GM12878 (cell line): ENCODE measurements at regions of chr3 and their contacts with region 1.

Region 1: GRCh38 chr3:191253089-191253799 is 54.2 kb downstream of the OSTN start:
- DNase-seq: peak; percentile 35
- ATAC-seq: peak; percentile 70
- H3K4me3 ChIP-seq: peak overlapping the region; percentile 28; the same call in 1 of the 2 replicates
- H3K27ac ChIP-seq: peak overlapping the region; percentile 42; the same call in 1 of the 2 replicates
- H3K4me1 ChIP-seq: peaks cover 25% of the 10 kb centered on the region
- H3K27me3 ChIP-seq: no peaks in the 10 kb centered on the region
- CTCF ChIP-seq: no peak
- EP300 ChIP-seq: no peak
- POLR2A ChIP-seq: no peak
- RAD21 ChIP-seq: no peak

Region 2: DNA sequence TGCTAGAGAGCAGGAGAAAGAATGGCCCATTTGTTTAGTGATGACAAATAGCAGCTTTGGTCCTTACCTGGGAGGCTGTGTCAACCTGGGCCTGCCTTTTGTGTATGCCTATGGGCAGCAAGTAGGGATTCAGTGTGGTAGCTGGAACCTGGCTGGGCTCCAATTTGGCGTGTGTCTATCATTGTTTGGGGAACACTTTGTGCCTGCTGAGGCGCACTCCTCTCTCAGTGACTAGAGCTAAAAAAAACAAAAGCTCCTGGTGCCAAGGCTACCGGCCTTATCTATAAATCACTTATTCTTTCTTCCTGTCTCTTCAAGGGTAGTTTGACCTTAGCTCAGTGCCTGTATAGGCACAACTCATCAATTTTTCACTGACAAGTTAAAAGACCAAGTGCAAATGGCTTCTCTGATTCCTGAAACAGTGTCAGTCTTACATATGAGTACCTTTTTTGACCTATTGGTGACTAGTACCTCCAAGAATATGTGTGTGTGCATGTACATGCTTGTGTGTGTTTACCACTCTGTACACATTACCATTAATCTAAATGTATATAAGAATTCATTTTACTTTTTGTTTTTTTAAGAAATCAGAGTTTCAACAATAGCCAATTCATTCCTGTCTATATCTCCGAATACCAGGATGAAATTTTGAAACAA is 445.4 kb before region 1 on chr3:
- CTCF ChIA-PET with region 1: no interaction called
- POLR2A ChIA-PET with region 1: no interaction called
- RAD21 ChIA-PET with region 1: no interaction called
- SMC1A ChIA-PET with region 1: no interaction called
- in situ Hi-C with region 1: no loop called
- intact Hi-C with region 1: no loop called
- DNase-seq: no peak
- ATAC-seq: no peak
- H3K4me3 ChIP-seq: no peak overlapping the region
- H3K27ac ChIP-seq: no peak overlapping the region
- H3K4me1 ChIP-seq: no peaks in the 10 kb centered on the region
- H3K27me3 ChIP-seq: no peaks in the 10 kb centered on the region
- CTCF ChIP-seq: no peak
- EP300 ChIP-seq: no peak
- POLR2A ChIP-seq: no peak
- RAD21 ChIP-seq: no peak

Region 3: DNA sequence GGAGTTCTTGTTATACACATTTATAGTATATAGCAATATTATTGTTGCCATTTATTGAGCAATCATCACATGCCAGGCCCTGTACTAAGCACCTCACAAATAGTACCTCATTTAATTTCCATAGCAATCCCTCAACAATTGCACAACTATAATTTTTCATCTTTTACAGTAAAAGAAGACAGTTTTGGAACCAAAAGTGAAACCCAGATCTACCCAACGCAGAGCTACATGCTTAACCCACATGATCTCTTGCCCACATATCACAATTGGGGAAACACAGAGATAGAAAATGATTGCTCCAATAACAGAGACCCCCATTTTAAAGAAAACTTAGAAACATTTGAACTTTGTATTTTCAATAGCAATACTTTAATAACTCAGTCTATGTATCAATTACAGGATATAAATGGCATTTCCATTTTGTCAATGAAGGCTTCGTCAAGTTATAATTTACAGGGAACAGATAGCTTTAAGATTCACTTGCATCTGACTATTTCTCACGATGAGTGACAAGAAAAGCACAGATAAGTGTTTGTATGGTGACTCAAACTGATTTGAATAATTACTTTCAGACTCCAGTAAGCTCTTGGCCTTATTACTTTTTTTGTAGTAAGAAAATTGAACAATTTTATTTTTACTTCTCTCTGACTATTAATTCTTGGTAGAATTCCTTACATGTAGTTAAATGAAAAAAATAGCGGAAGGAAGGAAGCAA is 37.2 kb after region 1 on chr3:
- CTCF ChIA-PET with region 1: interaction called, 4 read pairs
- POLR2A ChIA-PET with region 1: interaction called, 6 read pairs
- RAD21 ChIA-PET with region 1: interaction called, 10 read pairs
- SMC1A ChIA-PET with region 1: interaction called, 12 read pairs
- in situ Hi-C with region 1: no loop called
- intact Hi-C with region 1: no loop called
- DNase-seq: no peak
- ATAC-seq: peak; percentile 93
- H3K4me3 ChIP-seq: no peak overlapping the region
- H3K27ac ChIP-seq: peak overlapping the region; percentile 68
- H3K4me1 ChIP-seq: peaks cover 13% of the 10 kb centered on the region
- H3K27me3 ChIP-seq: no peaks in the 10 kb centered on the region
- CTCF ChIP-seq: no peak
- EP300 ChIP-seq: no peak
- POLR2A ChIP-seq: no peak
- RAD21 ChIP-seq: no peak